ENCODE measurements at regions of chr17 and their contacts with region 1.

Region 1: DNA sequence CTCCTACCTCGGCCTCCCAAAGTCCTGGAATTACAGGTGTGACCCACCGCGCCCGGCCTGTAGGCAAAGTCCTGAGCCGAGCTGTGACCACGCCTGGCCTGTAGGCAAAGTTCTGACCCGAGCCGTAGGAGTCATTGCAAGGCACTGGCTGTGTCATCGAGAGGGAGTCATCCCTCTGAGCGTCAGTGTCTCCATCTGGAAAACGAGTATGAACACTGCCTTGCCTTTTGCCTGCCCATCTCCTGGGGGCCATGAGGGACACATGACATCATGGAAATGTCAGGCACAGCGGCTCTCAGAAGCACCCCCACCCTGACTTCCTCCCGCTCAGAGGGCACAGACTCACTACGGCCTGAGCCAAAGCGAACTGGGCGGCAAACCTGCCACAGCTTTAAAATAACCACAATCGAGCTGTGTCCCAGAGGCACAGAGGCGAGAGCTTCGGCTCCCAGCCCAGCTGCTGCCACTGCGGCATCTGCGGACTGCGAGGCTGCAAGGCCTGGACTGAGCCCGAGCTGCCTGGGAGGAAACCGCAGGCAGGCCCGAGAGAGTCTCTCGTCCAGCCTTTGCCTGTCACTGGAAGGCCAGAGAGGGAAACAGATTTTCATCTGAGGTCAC is 50.8 kb downstream of the RPH3AL start:
- DNase-seq: peak in 1 of 2 donors; percentile 62
- ATAC-seq: peak; percentile 60 to 66
- H3K4me3 ChIP-seq: peak overlapping the region in 2 of 4 donors; percentile 13 to 32
- H3K27ac ChIP-seq: peak overlapping the region; percentile 74 to 83 (median 78)
- H3K4me1 ChIP-seq: peaks cover 5 to 6% of the 10 kb centered on the region in 2 donors
- H3K27me3 ChIP-seq: no peaks in the 10 kb centered on the region
- CTCF ChIP-seq: no peak
- POLR2A ChIP-seq: no peak

Region 2: DNA sequence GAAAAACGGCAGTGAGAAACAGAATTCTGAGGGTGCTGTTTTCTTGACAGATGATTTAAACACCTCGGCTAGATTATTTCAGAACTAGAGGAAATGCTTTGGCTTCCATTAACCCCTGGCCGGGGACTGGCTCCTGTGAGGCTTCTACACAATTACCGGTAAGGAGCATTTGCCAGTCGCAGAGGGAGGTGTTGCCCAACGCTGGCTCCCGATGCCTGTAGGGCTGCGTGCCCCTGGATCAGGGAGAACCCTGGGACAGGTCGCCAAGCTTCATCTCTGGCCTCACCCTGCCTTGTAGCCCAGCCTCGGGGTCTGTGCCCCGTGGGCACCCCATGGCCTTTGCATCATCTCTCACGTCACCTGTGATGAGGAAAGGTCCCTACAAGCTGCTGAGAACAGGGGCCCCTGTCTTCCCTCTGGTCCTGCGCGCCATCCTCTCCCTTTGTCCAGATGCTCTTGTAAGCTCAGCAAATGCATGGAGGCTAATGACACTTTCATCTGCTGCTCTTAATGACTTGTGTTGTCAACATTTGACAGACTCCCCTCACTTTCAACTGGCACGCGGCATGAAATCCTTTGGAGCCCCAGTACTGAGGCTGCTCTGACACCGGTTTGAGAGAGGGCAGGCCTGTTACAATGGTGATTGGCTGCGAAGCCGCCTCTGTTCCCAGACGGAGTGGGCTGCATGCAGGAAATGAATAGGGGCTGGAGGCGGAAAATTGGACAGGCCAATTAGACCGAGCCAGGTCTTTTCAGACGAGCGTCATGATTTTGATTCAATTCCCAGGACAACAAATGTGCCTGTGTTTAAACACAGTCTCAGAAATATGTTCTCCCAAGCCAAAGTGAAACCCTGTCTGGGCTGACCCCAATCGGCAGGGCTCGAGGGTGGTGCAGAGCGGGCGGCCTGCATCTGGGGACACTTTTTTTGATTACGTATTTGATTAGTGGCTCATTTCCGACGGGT is 34.8 kb before region 1 on chr17:
- in situ Hi-C with region 1: no loop called
- intact Hi-C with region 1: loop called (anchors 5 kb)
- DNase-seq: peak in 1 of 2 donors; percentile 24
- ATAC-seq: peak; percentile 58 to 75
- H3K4me3 ChIP-seq: peak overlapping the region in 3 of 4 donors; percentile 12 to 22 (median 20)
- H3K27ac ChIP-seq: peak overlapping the region; percentile 46 to 79 (median 66)
- H3K4me1 ChIP-seq: peaks cover 16 to 20% of the 10 kb centered on the region in 2 donors
- H3K27me3 ChIP-seq: no peaks in the 10 kb centered on the region
- CTCF ChIP-seq: no peak
- POLR2A ChIP-seq: peak in 1 of 2 donors; percentile 33

Region 3: GRCh38 chr17:333626-334396 is 32.0 kb after region 1 on chr17:
- in situ Hi-C with region 1: no loop called
- intact Hi-C with region 1: loop called (anchors 2 kb)
- DNase-seq: peak; percentile 72 to 78
- ATAC-seq: peak; percentile 76 to 77
- H3K4me3 ChIP-seq: peak overlapping the region; percentile 48 to 71 (median 54)
- H3K27ac ChIP-seq: peak overlapping the region; percentile 76 to 89 (median 84)
- H3K4me1 ChIP-seq: peaks cover 11 to 32% of the 10 kb centered on the region in 2 donors
- H3K27me3 ChIP-seq: peaks cover 6 to 16% (median 7%) of the 10 kb centered on the region in 3 donors
- CTCF ChIP-seq: no peak
- POLR2A ChIP-seq: peak; percentile 60 to 84

Region 4: DNA sequence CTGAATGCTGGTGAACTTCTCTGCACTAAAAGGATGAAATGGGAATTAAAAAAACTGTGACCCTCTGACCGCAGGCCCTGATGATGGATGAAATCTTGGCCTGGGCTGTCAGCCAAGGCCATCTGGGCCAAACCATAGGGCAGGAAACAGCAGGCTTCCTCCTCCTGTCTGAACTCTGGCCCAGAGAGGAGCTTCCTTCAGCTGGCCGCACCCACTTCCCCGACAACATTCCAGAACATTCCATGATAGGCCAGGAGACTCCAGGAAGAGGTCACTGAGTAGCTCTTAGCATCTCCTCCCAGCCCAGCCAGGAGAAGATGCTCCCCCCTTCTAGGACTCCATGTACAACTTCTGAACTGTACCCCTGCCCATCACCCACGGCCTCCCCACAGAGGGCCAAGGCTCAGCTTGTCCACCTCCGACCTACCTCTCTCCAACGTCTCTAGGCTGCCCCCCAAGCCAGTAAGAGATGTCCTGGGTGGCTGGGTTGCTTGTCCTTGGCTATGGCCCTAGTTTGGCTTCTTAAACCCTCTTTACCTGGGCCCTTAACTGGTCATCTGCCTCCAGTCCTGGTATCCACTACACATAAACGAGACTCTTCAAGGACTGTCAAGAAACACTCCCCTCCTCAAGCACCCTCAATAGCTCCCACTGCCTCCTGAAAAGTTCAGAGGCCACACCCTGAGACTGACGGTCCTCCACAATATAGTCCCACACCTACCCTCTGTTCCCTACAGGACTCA is 49.1 kb after region 1 on chr17:
- in situ Hi-C with region 1: no loop called
- intact Hi-C with region 1: loop called (anchors 1 kb)
- DNase-seq: peak; percentile 70 to 84
- ATAC-seq: peak; percentile 66 to 77
- H3K4me3 ChIP-seq: no peak overlapping the region
- H3K27ac ChIP-seq: peak overlapping the region; percentile 80 to 86 (median 82)
- H3K4me1 ChIP-seq: peaks cover 35 to 36% of the 10 kb centered on the region in 2 donors
- H3K27me3 ChIP-seq: no peaks in the 10 kb centered on the region
- CTCF ChIP-seq: no peak
- POLR2A ChIP-seq: peak in 1 of 2 donors; percentile 49

Measured in gastrocnemius medialis (tissue), 4 donors.